SK-MEL-5 (cell line): ENCODE measurements at regions of chr7 and their contacts with region 1.

Region 1: GRCh38 chr7:77747178-77747577 is 50.9 kb downstream of the RSBN1L start:
- DNase-seq: no peak

Region 2: GRCh38 chr7:77696198-77697028 is 50.8 kb before region 1 on chr7 and contains the start of gene RSBN1L:
- in situ Hi-C with region 1: loop called (anchors 10 kb)
- DNase-seq: peak; percentile 99
- total RNA-seq, gene RSBN1L: 27.2 and 29.3 TPM in 2 replicates

Region 3: DNA sequence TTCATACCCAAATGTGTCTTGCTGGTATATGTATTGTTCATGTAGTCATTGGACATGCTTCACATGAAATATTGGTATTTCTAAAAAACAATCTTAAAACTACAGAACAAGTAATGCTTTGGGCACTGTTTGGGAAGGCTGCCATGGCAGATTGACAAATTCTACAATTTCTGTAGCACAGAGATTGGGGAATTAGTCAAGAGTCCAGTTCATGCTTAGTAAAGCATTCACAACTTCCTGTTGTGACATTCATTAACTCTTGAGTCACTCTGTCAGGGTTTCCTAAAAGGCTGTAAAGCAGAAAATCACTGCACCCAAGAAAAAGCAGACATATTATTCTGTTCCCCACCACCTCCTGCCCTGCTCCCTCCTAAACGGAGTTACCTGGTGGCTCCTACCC is 450.3 kb after region 1 on chr7:
- in situ Hi-C with region 1: no loop called
- DNase-seq: no peak

Region 4: DNA sequence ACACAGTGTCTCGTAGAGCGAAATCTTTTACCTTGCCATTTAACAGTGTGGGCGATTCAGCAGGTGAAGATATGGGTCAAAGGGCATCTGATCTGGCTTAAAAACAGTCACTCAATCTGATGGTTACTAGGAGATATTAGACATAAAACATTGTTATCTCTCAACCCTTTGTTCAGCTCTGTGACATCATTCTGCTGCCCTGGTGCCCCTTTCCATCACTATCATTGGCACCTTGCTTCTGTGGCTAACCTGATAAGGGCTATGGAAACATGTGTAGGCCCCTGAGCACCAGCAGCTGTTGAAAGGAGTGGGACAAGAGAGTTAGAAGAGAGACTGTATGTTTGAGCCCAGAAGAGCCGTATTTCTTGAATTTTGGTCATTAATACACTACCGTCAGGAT is 701.7 kb after region 1 on chr7:
- in situ Hi-C with region 1: no loop called
- DNase-seq: no peak